Activated CD4-positive, alpha-beta T cell treated with anti-CD3 and anti-CD28 coated beads for 36 hours (primary cell): ENCODE measurements at regions of chr11 and their contacts with region 1.

Region 1: DNA sequence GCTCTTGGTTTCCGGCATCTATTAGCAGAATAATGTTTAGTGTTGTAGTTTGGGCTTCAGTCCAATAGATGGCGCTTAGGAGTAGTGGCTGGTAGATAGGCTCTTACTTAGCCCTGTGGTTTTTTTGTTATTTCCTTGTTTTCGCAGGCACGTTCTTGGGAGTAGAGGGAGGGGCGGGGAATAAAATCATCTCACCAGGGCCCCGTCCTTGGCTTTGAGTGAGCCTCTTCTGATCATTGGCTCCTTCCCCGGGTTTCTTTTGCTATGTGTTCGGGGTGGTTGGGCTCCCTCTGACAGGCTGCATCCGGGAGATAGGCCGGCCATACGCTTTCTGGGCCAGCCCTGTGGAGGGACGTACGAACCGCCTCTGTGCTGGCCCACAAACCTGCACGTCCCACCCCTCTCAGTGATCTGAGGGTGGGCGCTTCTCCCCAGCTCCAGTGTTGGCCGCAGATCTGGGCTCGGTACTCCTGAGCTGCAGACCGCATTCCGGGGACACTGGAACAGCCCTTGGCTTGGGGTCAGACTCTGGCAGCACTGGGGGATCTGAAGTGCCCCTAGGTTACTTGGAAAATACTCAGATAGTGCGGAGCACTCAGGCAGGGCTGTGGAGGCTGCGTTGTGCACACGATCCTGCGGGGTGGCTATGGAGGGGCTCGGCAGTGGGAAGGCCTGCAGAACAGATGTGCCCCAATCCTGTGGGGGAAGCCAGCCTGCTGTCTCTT is 217.0 kb downstream of the DYNC2H1 start:
- DNase-seq: peak; percentile 27
- ATAC-seq: peak; percentile 74
- H3K4me3 Mint-ChIP-seq: no peak overlapping the region
- H3K27ac Mint-ChIP-seq: no peak overlapping the region
- H3K4me1 Mint-ChIP-seq: peaks cover 4% of the 10 kb centered on the region
- H3K27me3 Mint-ChIP-seq: no peaks in the 10 kb centered on the region

Region 2: GRCh38 chr11:103537904-103538502 is 211.8 kb after region 1 on chr11:
- CTCF ChIA-PET with region 1: no interaction called
- POLR2A ChIA-PET with region 1: no interaction called
- intact Hi-C with region 1: loop called (anchors 5 kb)
- DNase-seq: no peak
- ATAC-seq: no peak
- H3K4me3 Mint-ChIP-seq: no peak overlapping the region
- H3K27ac Mint-ChIP-seq: no peak overlapping the region
- H3K4me1 Mint-ChIP-seq: no peaks in the 10 kb centered on the region
- H3K27me3 Mint-ChIP-seq: peaks cover 3% of the 10 kb centered on the region